ENCODE measurements at regions of chr2 and their contacts with region 1.

Region 1: GRCh38 chr2:100936070-100936741 is 65.9 kb upstream of the RPL31 start:
- DNase-seq: no peak
- ATAC-seq: no peak
- H3K4me3 ChIP-seq: no peak overlapping the region
- H3K27ac ChIP-seq: no peak overlapping the region
- H3K4me1 ChIP-seq: no peaks in the 10 kb centered on the region
- H3K27me3 ChIP-seq: no peaks in the 10 kb centered on the region
- CTCF ChIP-seq: no peak
- EP300 ChIP-seq: no peak
- POLR2A ChIP-seq: no peak
- RAD21 ChIP-seq: no peak

Region 2: DNA sequence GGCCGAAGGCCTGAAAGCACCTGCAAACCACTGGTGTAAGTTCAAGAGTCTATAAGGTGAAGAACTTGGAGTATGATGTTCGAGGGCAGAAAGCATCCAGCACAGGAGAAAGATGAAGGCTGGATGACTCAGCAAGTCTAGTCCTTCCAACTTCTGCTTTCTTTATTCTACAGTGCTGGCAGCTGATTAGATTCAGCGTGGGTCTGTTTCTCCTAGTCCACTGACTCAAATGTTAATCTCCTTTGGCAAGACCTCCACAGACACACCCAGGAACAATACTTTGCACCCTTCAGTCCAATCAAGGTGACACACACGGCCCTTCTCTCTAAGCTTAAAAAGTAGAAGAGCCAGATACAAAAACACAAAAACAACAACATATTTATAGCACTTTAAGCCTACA is 422.6 kb before region 1 on chr2:
- CTCF ChIA-PET with region 1: no interaction called
- POLR2A ChIA-PET with region 1: no interaction called
- in situ Hi-C with region 1: no loop called
- intact Hi-C with region 1: no loop called
- DNase-seq: no peak
- ATAC-seq: no peak
- H3K4me3 ChIP-seq: no peak overlapping the region
- H3K27ac ChIP-seq: no peak overlapping the region
- H3K4me1 ChIP-seq: no peaks in the 10 kb centered on the region
- H3K27me3 ChIP-seq: peaks cover 0 to 8% of the 10 kb centered on the region in 2 experiments; a peak in 2 of 5 replicates
- CTCF ChIP-seq: no peak
- EP300 ChIP-seq: no peak
- POLR2A ChIP-seq: no peak
- RAD21 ChIP-seq: no peak

Region 3: GRCh38 chr2:100902833-100903405 is 33.3 kb before region 1 on chr2:
- CTCF ChIA-PET with region 1: no interaction called
- POLR2A ChIA-PET with region 1: no interaction called
- in situ Hi-C with region 1: no loop called
- intact Hi-C with region 1: loop called (anchors 2 kb)
- DNase-seq: peak; percentile 81
- ATAC-seq: peak; percentile 90
- H3K4me3 ChIP-seq: no peak overlapping the region
- H3K27ac ChIP-seq: no peak overlapping the region
- H3K4me1 ChIP-seq: peaks cover 25% of the 10 kb centered on the region
- H3K27me3 ChIP-seq: no peaks in the 10 kb centered on the region
- CTCF ChIP-seq: 0 out of 2 replicates have a peak, but pooled peaks have one; percentile 14
- EP300 ChIP-seq: peak in 1 of 2 experiments; percentile 21; a peak in 1 of 4 replicates
- POLR2A ChIP-seq: no peak
- RAD21 ChIP-seq: peak; percentile 30; the same call in 1 of the 2 replicates